Dendritic cell treated with granulocyte-macrophage colony-stimulating factor and Interleukin-4, amounts not matched to agents 40 ng/mL and 50 ng/mL, for 4 days (primary cell): ENCODE measurements at regions of chr21 and their contacts with region 1.

Region 1: GRCh38 chr21:36297921-36298594 is 21.9 kb upstream of the MORC3 start:
- H3K4me3 Mint-ChIP-seq: peak overlapping the region; percentile 79
- H3K27ac Mint-ChIP-seq: peak overlapping the region; percentile 98
- H3K4me1 Mint-ChIP-seq: peaks cover 36% of the 10 kb centered on the region
- H3K27me3 Mint-ChIP-seq: no peaks in the 10 kb centered on the region

Region 2: GRCh38 chr21:36330904-36331303 is 32.8 kb after region 1 on chr21:
- intact Hi-C with region 1: loop called (anchors 5 kb)
- H3K4me3 Mint-ChIP-seq: no peak overlapping the region
- H3K27ac Mint-ChIP-seq: peak overlapping the region; percentile 34
- H3K4me1 Mint-ChIP-seq: peaks cover 36% of the 10 kb centered on the region
- H3K27me3 Mint-ChIP-seq: no peaks in the 10 kb centered on the region